Transverse colon (tissue), 4 donors: ENCODE measurements at regions of chr21 and their contacts with region 1.

Region 1: GRCh38 chr21:31580866-31581276 is 78.6 kb upstream of the SOD1 start:
- DNase-seq: peak; percentile 70
- H3K4me3 ChIP-seq: no peak overlapping the region
- H3K27ac ChIP-seq: no peak overlapping the region
- H3K4me1 ChIP-seq: no peaks in the 10 kb centered on the region
- H3K27me3 ChIP-seq: no peaks in the 10 kb centered on the region
- CTCF ChIP-seq: peak; percentile 70 to 81 (median 75)
- EP300 ChIP-seq: no peak
- POLR2A ChIP-seq: no peak

Region 2: GRCh38 chr21:31343680-31344480 is 237.0 kb before region 1 on chr21 and contains the start of gene TIAM1:
- in situ Hi-C with region 1: loop called in 1 of 4 experiments (anchors 25 kb)
- intact Hi-C with region 1: no loop called
- DNase-seq: peak; percentile 36
- H3K4me3 ChIP-seq: peak within 1 kb of the TSS in 3 of 4 donors; percentile 10 to 44 (median 27)
- H3K27ac ChIP-seq: peak within 1 kb of the TSS in 2 of 4 donors; percentile 8 to 27
- H3K4me1 ChIP-seq: peaks cover 0 to 11% (median 5%) of the 10 kb centered on the region in 4 donors
- H3K27me3 ChIP-seq: peaks cover 30% of the 10 kb centered on the region
- CTCF ChIP-seq: no peak
- EP300 ChIP-seq: no peak
- POLR2A ChIP-seq: no peak
- total RNA-seq, gene TIAM1: 4.5 to 18.9 (median 6.5) TPM

Region 3: GRCh38 chr21:31498981-31499380 is 81.9 kb before region 1 on chr21:
- in situ Hi-C with region 1: no loop called
- intact Hi-C with region 1: no loop called
- DNase-seq: no peak
- H3K4me3 ChIP-seq: no peak overlapping the region
- H3K27ac ChIP-seq: no peak overlapping the region
- H3K4me1 ChIP-seq: no peaks in the 10 kb centered on the region
- H3K27me3 ChIP-seq: no peaks in the 10 kb centered on the region
- CTCF ChIP-seq: no peak
- EP300 ChIP-seq: no peak
- POLR2A ChIP-seq: no peak